ENCODE measurements at regions of chr1 and their contacts with region 1.

Region 1: GRCh38 chr1:177181631-177182291 is 11.0 kb downstream of the BRINP2 start:
- DNase-seq: peak; percentile 33
- ATAC-seq: peak; percentile 97
- H3K4me3 ChIP-seq: peak overlapping the region in 1 of 2 experiments; percentile 16; a peak in 1 of 4 replicates
- H3K27ac ChIP-seq: no peak overlapping the region
- H3K4me1 ChIP-seq: peaks cover 0 to 4% of the 10 kb centered on the region in 2 experiments; a peak in 1 of 4 replicates
- H3K27me3 ChIP-seq: 0 out of 2 replicates have a peak, but pooled peaks cover 13% of the 10 kb centered on the region
- CTCF ChIP-seq: peak; percentile 54 to 84 (median 77)
- POLR2A ChIP-seq: no peak
- RAD21 ChIP-seq: peak; percentile 69

Region 2: DNA sequence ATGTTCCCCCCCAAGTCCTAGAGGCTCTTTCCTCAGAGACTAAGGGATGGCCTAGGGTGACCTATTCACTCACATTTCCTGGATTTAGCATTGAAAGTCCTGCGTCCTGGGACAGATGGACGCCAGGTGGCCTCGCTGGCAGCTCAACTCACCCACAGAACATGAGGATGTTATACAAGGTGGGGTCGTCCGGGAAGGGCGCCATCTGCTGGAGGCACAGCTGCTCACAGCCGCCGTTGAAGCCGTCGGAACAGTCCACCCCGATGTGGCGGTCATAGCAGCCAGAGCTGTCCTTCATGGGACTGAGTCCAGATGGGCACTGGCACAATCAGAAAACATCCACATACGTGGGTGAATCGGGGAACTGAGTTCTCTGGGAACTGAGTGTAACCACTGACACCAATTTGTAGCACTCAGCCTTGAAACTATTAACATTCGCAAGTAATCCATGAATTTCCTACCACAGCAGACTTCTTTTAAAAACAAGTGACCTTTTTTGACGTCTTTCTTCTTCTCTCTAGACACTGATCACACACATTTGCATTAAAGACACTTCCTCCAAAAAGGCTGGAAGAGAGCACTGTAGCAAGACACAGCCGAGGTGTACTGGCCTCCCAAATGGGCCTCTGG is 232.6 kb before region 1 on chr1:
- CTCF ChIA-PET with region 1: interaction called, 8 read pairs
- POLR2A ChIA-PET with region 1: no interaction called
- RAD21 ChIA-PET with region 1: no interaction called
- intact Hi-C with region 1: loop called (anchors 1 kb)
- DNase-seq: peak; percentile 63
- ATAC-seq: peak; percentile 99
- H3K4me3 ChIP-seq: no peak overlapping the region
- H3K27ac ChIP-seq: no peak overlapping the region
- H3K4me1 ChIP-seq: no peaks in the 10 kb centered on the region
- H3K27me3 ChIP-seq: peaks cover 16% of the 10 kb centered on the region
- CTCF ChIP-seq: peak; percentile 86 to 99 (median 91)
- POLR2A ChIP-seq: no peak
- RAD21 ChIP-seq: peak; percentile 70

Region 3: DNA sequence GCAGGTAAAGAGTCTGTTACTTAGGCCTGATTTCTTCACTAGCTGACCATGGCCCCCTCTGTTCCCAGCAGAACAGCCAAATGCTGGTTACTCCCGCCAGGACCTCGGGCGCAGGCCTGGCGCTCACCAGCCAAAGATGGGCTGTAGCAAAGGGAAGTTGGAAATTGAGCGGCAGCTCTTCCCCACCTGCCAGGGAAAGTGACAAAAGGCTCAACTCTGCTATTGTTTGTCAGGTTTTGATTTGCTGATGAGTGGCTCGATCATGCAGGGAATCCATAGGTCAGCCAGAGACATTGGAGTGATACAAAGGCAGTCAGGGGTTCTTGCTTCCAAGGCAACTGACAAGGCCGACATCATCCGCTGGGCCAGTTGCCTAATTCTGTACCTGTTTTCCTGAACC is 137.4 kb before region 1 on chr1:
- CTCF ChIA-PET with region 1: no interaction called
- POLR2A ChIA-PET with region 1: no interaction called
- RAD21 ChIA-PET with region 1: no interaction called
- intact Hi-C with region 1: no loop called
- DNase-seq: no peak
- ATAC-seq: no peak
- H3K4me3 ChIP-seq: no peak overlapping the region
- H3K27ac ChIP-seq: no peak overlapping the region
- H3K4me1 ChIP-seq: no peaks in the 10 kb centered on the region
- H3K27me3 ChIP-seq: 0 out of 2 replicates have a peak, but pooled peaks cover 11% of the 10 kb centered on the region
- CTCF ChIP-seq: no peak
- POLR2A ChIP-seq: no peak
- RAD21 ChIP-seq: no peak